ENCODE measurements at regions of chr12 and their contacts with region 1.

Region 1: GRCh38 chr12:121793838-121794533 is 498 bp upstream of the RHOF start:
- DNase-seq: peak; percentile 95
- H3K4me3 Mint-ChIP-seq: peak overlapping the region; percentile 96
- H3K27ac Mint-ChIP-seq: peak overlapping the region; percentile 91
- H3K4me1 Mint-ChIP-seq: peaks cover 61% of the 10 kb centered on the region
- H3K27me3 Mint-ChIP-seq: no peaks in the 10 kb centered on the region

Region 2: DNA sequence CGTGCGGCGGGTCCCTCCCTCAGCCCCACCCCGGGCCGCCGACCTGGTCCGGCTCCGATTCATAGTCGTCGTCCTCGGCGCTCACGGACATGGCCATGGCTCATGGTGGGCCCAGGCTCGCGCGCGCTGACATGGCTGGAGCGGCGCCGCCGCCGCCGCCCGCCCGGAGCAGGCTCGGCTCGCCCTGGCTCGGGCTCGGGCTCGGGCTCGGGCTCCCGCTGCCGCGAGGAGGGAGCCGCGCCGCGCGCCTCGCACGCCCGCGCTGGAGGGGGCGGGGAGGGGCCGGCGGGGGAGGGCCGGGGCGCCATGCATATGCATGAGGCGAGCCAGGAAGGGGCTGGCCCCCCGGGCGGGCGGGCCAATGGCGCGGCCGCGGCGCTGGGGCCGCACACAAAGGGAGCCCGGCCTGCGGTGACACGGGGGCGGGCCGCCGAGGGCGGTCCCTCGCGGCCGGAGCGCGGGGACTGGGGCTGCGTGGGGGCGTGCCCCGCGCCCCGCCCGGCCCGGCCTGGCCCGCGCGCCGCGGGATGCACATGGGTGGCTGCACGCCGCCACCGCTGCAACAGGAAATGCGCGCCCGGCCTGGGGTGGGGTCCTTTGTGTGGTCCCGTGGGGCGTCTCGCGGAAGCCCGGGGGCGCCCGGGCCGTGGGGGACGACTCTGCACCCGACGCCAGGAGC is 326.7 kb before region 1 on chr12:
- intact Hi-C with region 1: loop called (anchors 1 kb)
- DNase-seq: peak; percentile 88
- H3K4me3 Mint-ChIP-seq: no peak overlapping the region
- H3K27ac Mint-ChIP-seq: no peak overlapping the region
- H3K4me1 Mint-ChIP-seq: peaks cover 29% of the 10 kb centered on the region
- H3K27me3 Mint-ChIP-seq: peaks cover 8% of the 10 kb centered on the region

Region 3: GRCh38 chr12:121688966-121689365 is 105.0 kb before region 1 on chr12:
- intact Hi-C with region 1: loop called (anchors 1 kb)
- DNase-seq: no peak
- H3K4me3 Mint-ChIP-seq: no peak overlapping the region
- H3K27ac Mint-ChIP-seq: no peak overlapping the region
- H3K4me1 Mint-ChIP-seq: peaks cover 10% of the 10 kb centered on the region
- H3K27me3 Mint-ChIP-seq: peaks cover 7% of the 10 kb centered on the region

Region 4: GRCh38 chr12:121773011-121773777 is 20.8 kb before region 1 on chr12:
- intact Hi-C with region 1: loop called (anchors 1 kb)
- DNase-seq: peak; percentile 71
- H3K4me3 Mint-ChIP-seq: no peak overlapping the region
- H3K27ac Mint-ChIP-seq: no peak overlapping the region
- H3K4me1 Mint-ChIP-seq: peaks cover 7% of the 10 kb centered on the region
- H3K27me3 Mint-ChIP-seq: no peaks in the 10 kb centered on the region

Region 5: GRCh38 chr12:121839106-121839992 is 45.4 kb after region 1 on chr12:
- intact Hi-C with region 1: loop called (anchors 1 kb)
- DNase-seq: peak; percentile 99
- H3K4me3 Mint-ChIP-seq: peak overlapping the region; percentile 95
- H3K27ac Mint-ChIP-seq: peak overlapping the region; percentile 79
- H3K4me1 Mint-ChIP-seq: peaks cover 16% of the 10 kb centered on the region
- H3K27me3 Mint-ChIP-seq: peaks cover 4% of the 10 kb centered on the region